Dendritic cell treated with granulocyte-macrophage colony-stimulating factor and Interleukin-4, amounts not matched to agents 40 ng/mL and 50 ng/mL, for 4 days (primary cell): ENCODE measurements at regions of chr12 and their contacts with region 1.

Region 1: GRCh38 chr12:48996794-48997718 is 2.1 kb downstream of the DDN start:
- H3K4me3 Mint-ChIP-seq: peak overlapping the region; percentile 51
- H3K27ac Mint-ChIP-seq: no peak overlapping the region
- H3K4me1 Mint-ChIP-seq: peaks cover 54% of the 10 kb centered on the region
- H3K27me3 Mint-ChIP-seq: peaks cover 89% of the 10 kb centered on the region

Region 2: GRCh38 chr12:48882315-48882687 is 114.8 kb before region 1 on chr12:
- intact Hi-C with region 1: no loop called
- H3K4me3 Mint-ChIP-seq: peak overlapping the region; percentile 0
- H3K27ac Mint-ChIP-seq: no peak overlapping the region
- H3K4me1 Mint-ChIP-seq: peaks cover 11% of the 10 kb centered on the region
- H3K27me3 Mint-ChIP-seq: peaks cover 46% of the 10 kb centered on the region

Region 3: GRCh38 chr12:49018261-49019119 is 21.4 kb after region 1 on chr12 and contains the start of gene PRKAG1:
- intact Hi-C with region 1: loop called (anchors 1 kb)
- H3K4me3 Mint-ChIP-seq: peak within 1 kb of the TSS; percentile 91
- H3K27ac Mint-ChIP-seq: peak within 1 kb of the TSS; percentile 99
- H3K4me1 Mint-ChIP-seq: peaks cover 44% of the 10 kb centered on the region
- H3K27me3 Mint-ChIP-seq: no peaks in the 10 kb centered on the region

Region 4: DNA sequence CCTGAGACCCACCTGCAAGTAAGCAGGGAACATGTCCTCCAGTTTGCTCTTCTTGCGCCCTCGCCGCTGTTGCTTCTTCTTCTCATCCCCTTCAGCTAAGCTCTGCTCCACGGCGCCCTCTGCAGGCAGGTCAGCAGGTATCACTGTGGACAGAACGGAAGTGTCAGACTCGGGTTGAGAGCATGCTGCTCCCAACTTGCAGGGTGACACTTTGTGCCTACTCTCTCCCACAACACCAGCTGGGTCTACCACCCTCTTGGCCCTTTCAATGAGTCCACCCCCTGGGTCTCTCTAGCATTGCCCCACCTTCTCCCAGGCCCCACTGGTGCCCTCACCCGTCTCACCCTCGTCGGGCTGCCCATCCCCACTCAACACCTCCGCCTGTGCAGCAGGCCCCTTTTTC is 46.8 kb after region 1 on chr12:
- intact Hi-C with region 1: loop called (anchors 1 kb)
- H3K4me3 Mint-ChIP-seq: no peak overlapping the region
- H3K27ac Mint-ChIP-seq: no peak overlapping the region
- H3K4me1 Mint-ChIP-seq: no peaks in the 10 kb centered on the region
- H3K27me3 Mint-ChIP-seq: no peaks in the 10 kb centered on the region

Region 5: GRCh38 chr12:49400304-49400703 is 403.2 kb after region 1 on chr12:
- intact Hi-C with region 1: no loop called
- H3K4me3 Mint-ChIP-seq: no peak overlapping the region
- H3K27ac Mint-ChIP-seq: no peak overlapping the region
- H3K4me1 Mint-ChIP-seq: peaks cover 21% of the 10 kb centered on the region
- H3K27me3 Mint-ChIP-seq: no peaks in the 10 kb centered on the region

Region 6: DNA sequence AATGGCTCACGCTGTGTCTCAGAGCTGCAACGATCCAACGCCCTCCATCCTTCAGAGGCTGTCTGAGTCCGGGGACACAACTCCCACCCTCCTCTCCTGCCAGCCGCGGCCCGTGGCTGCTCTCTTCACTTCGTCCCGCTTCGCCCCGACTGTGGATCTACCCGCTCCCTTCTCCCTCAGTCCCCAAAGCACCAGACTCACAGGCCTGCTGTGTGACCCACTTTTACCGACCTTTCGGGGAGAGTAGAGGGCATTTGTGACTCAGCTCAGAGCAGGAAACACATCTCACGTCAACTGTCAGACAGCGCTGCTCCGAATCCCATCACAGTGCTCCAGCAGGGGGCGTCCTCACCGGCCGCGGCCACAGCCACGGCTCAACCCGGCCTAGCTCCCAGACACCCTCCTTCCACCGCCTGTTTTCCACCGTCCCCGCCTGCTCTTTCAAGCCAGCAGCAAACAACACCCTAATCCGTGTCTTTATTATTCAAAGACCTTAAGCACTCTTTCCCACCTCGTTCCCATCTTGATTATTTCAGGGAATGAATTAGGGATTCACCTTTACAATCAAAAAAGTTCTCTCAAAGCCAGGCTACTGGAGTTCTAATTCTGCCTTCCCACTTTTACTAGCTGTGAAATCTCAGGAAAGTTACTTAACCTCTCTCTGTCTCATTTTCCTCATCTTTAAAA is 948.5 kb after region 1 on chr12:
- intact Hi-C with region 1: no loop called
- H3K4me3 Mint-ChIP-seq: peak overlapping the region; percentile 62
- H3K27ac Mint-ChIP-seq: peak overlapping the region; percentile 19
- H3K4me1 Mint-ChIP-seq: peaks cover 34% of the 10 kb centered on the region
- H3K27me3 Mint-ChIP-seq: peaks cover 71% of the 10 kb centered on the region